ENCODE measurements at regions of chr2 and their contacts with region 1.

Region 1: DNA sequence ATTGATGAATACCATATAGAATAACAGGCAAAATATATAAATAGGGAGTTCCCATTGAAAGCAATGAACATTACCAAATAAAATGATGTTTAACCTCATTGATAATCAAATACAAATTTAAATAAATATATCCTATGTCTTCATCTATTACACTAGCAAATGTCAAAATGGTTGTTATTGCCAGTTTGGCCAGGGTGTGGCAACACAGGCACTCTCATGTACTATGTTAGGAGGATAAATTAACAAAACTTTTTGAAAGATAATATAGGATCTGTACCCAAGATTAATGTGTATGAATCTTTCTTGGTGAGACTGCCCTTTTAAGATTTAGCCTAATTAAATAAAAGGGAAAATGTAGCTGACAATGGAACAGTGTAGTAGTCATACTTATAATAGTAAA is 659.3 kb downstream of the ERBB4 start:
- DNase-seq: peak; percentile 24
- ATAC-seq: peak; percentile 67
- H3K4me3 ChIP-seq: no peak overlapping the region
- H3K27ac ChIP-seq: no peak overlapping the region
- H3K4me1 ChIP-seq: no peaks in the 10 kb centered on the region
- H3K27me3 ChIP-seq: no peaks in the 10 kb centered on the region
- CTCF ChIP-seq: peak; percentile 48

Region 2: DNA sequence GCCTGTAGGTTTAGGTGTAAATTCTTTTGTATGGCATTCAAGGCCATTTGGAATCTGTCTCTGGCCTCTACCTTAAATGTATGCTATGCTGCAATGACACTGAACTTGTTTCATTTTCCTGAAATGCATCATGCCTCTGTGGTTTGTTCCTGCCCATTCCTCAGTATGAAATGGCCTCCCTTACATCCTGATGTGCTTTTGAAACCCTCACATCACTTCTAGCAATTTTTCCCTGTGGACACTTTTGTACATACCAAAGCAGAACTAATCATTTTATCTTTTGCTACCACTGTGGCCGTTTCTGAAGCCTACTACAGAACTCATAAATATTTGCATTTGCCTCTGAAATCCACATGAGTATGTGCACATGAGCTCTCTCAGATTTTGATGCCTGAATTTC is 102.1 kb after region 1 on chr2:
- CTCF ChIA-PET with region 1: no interaction called
- POLR2A ChIA-PET with region 1: no interaction called
- intact Hi-C with region 1: no loop called
- DNase-seq: no peak
- ATAC-seq: no peak
- H3K4me3 ChIP-seq: no peak overlapping the region
- H3K27ac ChIP-seq: no peak overlapping the region
- H3K4me1 ChIP-seq: no peaks in the 10 kb centered on the region
- H3K27me3 ChIP-seq: no peaks in the 10 kb centered on the region
- CTCF ChIP-seq: no peak

Region 3: DNA sequence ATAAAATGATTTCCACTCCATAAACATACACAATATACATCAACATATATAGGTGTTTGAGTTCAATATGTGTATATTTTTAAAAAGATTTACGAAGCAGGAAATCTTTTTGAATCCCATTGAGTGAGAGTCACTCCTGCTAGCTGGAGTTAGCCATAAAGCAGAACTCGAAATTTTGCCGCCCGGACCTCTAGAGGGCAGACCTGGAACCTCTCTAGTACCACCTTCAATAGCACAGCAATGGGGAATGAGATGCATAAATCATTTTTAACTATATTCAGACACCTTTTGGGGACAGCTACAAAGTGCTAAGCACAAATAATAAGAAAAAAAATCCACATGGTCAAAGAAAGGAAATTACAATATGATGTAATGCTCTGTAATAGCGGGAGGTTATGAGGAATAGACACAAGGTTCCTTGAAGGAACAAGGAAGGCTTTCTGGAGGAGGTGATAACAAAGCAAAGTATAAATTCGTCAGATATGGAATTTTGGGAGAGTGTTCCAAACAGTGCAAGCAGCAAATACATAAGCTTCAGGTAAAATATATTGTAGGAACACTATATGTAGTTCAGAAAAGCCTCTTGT is 125.9 kb after region 1 on chr2:
- CTCF ChIA-PET with region 1: no interaction called
- POLR2A ChIA-PET with region 1: no interaction called
- intact Hi-C with region 1: loop called (anchors 1 kb)
- DNase-seq: peak; percentile 68
- ATAC-seq: peak; percentile 87
- H3K4me3 ChIP-seq: no peak overlapping the region
- H3K27ac ChIP-seq: no peak overlapping the region
- H3K4me1 ChIP-seq: no peaks in the 10 kb centered on the region
- H3K27me3 ChIP-seq: no peaks in the 10 kb centered on the region
- CTCF ChIP-seq: peak; percentile 82

Region 4: DNA sequence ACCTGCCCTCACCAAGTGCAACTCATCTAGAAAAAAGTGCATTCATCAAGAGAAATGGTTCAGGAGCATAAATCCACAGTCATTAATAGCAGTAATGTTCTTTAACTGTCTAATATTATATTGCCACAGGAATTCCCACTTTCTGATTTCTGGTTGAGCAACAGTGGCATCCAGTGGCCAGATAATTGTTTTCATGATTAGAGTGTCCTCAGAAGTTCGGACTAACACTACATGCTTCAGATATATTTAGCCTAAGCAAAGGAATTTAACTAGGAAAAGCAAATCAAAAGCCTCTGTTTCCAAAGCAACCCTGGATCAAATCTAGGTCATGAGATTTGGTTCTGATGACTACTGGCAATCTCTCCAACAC is 669.1 kb after region 1 on chr2:
- CTCF ChIA-PET with region 1: no interaction called
- POLR2A ChIA-PET with region 1: no interaction called
- intact Hi-C with region 1: loop called (anchors 1 kb)
- DNase-seq: peak; percentile 68
- ATAC-seq: peak; percentile 71
- H3K4me3 ChIP-seq: no peak overlapping the region
- H3K27ac ChIP-seq: no peak overlapping the region
- H3K4me1 ChIP-seq: no peaks in the 10 kb centered on the region
- H3K27me3 ChIP-seq: peaks cover 10% of the 10 kb centered on the region; the same call in 1 of the 2 replicates
- CTCF ChIP-seq: peak; percentile 68

Measured in PC-3 (cell line).